OCI-LY7 (cell line): ENCODE measurements at regions of chr2 and their contacts with region 1.

Region 1: DNA sequence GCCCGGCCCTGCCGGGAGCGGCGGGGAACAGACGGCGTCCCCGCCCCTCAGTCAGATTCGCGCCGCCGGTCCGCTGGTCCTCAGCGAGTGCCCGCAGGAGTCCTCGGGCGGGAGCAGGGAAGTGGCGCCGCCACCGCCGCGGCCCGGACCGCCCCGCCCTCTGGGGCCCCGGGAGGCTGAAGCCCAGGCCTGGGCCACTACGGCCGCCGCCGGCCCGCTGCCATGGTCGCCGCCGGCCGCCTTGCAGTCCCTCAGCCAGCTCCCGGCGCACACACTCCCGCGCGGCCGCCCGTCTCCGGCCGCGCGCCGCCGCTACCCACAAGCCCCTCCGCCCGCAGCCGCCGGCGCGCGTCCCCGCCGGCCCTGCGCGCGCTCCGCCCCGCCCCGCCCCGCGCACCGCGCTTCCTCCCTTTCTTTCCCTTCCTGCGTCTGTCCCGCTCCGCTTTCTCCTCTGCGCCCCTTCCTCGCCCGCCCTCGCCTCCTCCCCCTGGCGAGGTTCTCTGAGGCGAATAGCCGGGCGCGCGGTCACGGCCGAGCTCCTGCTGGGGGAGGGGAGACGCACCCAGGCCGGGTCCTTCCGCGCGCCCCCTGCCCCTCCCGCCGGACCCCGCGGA is at the start of gene ROCK2:
- DNase-seq: peak; percentile 81
- H3K4me3 ChIP-seq: peak within 1 kb of the TSS; percentile 89
- H3K27ac ChIP-seq: peak within 1 kb of the TSS; percentile 14
- H3K4me1 ChIP-seq: peaks cover 31% of the 10 kb centered on the region
- CTCF ChIP-seq: no peak
- total RNA-seq, gene ROCK2: 12.4 and 15.5 TPM in 2 replicates

Region 2: GRCh38 chr2:10812362-10813162 is 531.9 kb before region 1 on chr2 and contains the start of gene PDIA6:
- CTCF ChIA-PET with region 1: no interaction called
- POLR2A ChIA-PET with region 1: no interaction called
- intact Hi-C with region 1: loop called (anchors 5 kb)
- DNase-seq: peak; percentile 97
- H3K4me3 ChIP-seq: peak within 1 kb of the TSS; percentile 79
- H3K27ac ChIP-seq: peak within 1 kb of the TSS; percentile 70
- H3K4me1 ChIP-seq: peaks cover 46% of the 10 kb centered on the region
- CTCF ChIP-seq: no peak
- total RNA-seq, gene PDIA6: 171 and 192 TPM in 2 replicates

Region 3: GRCh38 chr2:11154923-11155380 is 189.5 kb before region 1 on chr2:
- CTCF ChIA-PET with region 1: no interaction called
- POLR2A ChIA-PET with region 1: no interaction called
- intact Hi-C with region 1: loop called (anchors 2 kb)
- DNase-seq: peak; percentile 96
- H3K4me3 ChIP-seq: peak overlapping the region; percentile 80
- H3K27ac ChIP-seq: peak overlapping the region; percentile 35
- H3K4me1 ChIP-seq: peaks cover 14% of the 10 kb centered on the region
- CTCF ChIP-seq: no peak